Aorta (tissue), 5 donors: ENCODE measurements at regions of chr5 and their contacts with region 1.

Region 1: GRCh38 chr5:140564196-140565023 is at the starts of genes APBB3 and SLC35A4:
- DNase-seq: peak; percentile 98 to 99
- ATAC-seq: peak; percentile 96
- H3K4me3 ChIP-seq: peak within 1 kb of the TSS; percentile 64 to 69
- H3K27ac ChIP-seq: peak within 1 kb of the TSS; percentile 29 to 91
- H3K4me1 ChIP-seq: no peaks in the 10 kb centered on the region
- H3K27me3 ChIP-seq: no peaks in the 10 kb centered on the region
- total RNA-seq, gene APBB3: 32.9 to 48.3 TPM
- total RNA-seq, gene SLC35A4: 38.9 to 43.4 TPM

Region 2: DNA sequence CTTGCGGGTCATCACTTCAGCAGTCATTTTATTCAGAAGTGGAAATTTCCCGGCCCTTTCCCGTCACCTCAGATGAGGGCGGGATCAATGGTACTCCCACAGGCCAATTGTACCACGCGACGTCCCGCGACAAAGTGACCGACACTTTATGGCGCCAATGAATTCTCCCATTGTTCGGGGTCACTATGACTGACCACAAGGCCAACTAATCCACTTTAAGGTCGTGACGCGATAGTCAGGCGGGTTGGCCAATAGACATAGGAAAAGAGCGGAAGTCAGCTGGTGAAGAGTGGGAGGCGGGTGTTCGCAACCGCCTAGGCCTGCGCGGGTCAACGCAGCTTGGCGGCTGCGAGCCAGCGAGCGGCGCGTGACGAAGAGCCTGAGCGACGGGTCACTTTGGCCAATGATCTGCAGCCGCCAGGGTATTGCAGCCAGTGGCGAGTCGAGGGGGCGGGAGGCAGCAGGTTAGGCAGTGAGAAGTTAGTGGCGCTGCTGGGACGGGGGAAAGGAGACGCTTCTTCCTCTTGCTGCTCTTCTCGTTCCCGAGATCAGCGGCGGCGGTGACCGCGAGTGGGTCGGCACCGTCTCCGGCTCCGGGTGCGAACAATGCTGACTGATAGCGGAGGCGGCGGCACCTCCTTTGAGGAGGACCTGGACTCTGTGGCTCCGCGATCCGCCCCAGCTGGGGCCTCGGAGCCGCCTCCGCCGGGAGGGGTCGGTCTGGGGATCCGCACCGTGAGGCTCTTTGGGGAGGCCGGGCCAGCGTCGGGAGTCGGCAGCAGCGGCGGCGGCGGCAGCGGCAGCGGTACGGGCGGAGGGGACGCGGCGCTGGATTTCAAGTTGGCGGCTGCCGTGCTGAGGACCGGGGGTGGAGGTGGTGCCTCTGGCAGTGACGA is 162.8 kb before region 1 on chr5 and contains the start of gene ANKHD1:
- intact Hi-C with region 1: loop called in 1 of 2 experiments (anchors 2 kb)
- DNase-seq: peak; percentile 99
- ATAC-seq: peak; percentile 98
- H3K4me3 ChIP-seq: peak within 1 kb of the TSS; percentile 66 to 85
- H3K27ac ChIP-seq: peak within 1 kb of the TSS; percentile 17 to 94
- H3K4me1 ChIP-seq: peaks cover 0 to 3% of the 10 kb centered on the region in 2 donors
- H3K27me3 ChIP-seq: no peaks in the 10 kb centered on the region
- total RNA-seq, gene ANKHD1: 112 to 138 TPM

Region 3: GRCh38 chr5:140524003-140524402 is 40.4 kb before region 1 on chr5:
- intact Hi-C with region 1: no loop called
- DNase-seq: no peak
- ATAC-seq: no peak
- H3K4me3 ChIP-seq: no peak overlapping the region
- H3K27ac ChIP-seq: no peak overlapping the region
- H3K4me1 ChIP-seq: no peaks in the 10 kb centered on the region
- H3K27me3 ChIP-seq: no peaks in the 10 kb centered on the region

Region 4: DNA sequence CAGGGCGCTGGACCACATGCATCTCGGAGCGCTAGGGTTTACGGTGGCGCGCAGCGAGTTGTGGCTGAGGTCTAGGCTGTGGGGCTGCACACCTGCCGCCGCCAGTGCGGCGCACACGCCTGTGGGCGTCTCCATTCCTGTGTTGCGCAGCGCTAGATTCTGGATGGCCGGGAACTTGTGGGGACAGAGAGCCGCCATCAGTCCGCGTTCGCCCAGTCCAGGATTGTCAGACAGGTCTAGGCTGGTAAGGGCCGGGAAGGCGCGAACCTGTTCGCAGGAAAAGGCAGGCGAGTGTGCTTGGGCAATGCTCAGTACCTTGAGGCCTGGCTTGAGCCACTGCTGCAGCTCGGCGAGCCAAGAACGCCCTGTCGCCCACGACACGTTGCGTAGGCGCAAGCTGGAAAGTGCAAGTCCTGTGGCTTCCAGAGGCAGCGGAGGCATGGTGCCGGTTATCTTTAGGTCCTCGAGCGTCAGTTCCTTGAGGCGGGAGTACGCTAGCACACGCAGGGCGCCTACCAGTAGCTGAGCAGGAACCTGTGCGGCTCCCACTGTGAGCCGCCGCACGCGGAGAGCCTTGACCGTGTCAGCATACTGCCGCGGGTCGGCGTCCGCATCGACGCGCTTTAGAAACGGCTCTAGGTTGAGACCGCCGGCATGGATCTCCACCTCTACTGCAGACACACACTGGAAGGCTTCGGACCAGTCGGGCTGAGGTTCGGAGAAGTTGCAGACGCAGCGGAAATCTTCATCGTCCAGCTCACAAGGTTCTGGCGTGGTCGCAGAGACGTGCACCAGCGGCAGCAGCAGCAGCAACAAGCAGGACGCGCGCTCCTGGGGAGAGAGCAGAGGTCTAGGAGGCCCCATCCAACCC is 68.0 kb after region 1 on chr5:
- intact Hi-C with region 1: loop called (anchors 2 to 5 kb)
- DNase-seq: peak; percentile 79 to 86
- ATAC-seq: peak; percentile 84
- H3K4me3 ChIP-seq: peak overlapping the region; percentile 15 to 28
- H3K27ac ChIP-seq: no peak overlapping the region
- H3K4me1 ChIP-seq: no peaks in the 10 kb centered on the region
- H3K27me3 ChIP-seq: no peaks in the 10 kb centered on the region

Region 5: DNA sequence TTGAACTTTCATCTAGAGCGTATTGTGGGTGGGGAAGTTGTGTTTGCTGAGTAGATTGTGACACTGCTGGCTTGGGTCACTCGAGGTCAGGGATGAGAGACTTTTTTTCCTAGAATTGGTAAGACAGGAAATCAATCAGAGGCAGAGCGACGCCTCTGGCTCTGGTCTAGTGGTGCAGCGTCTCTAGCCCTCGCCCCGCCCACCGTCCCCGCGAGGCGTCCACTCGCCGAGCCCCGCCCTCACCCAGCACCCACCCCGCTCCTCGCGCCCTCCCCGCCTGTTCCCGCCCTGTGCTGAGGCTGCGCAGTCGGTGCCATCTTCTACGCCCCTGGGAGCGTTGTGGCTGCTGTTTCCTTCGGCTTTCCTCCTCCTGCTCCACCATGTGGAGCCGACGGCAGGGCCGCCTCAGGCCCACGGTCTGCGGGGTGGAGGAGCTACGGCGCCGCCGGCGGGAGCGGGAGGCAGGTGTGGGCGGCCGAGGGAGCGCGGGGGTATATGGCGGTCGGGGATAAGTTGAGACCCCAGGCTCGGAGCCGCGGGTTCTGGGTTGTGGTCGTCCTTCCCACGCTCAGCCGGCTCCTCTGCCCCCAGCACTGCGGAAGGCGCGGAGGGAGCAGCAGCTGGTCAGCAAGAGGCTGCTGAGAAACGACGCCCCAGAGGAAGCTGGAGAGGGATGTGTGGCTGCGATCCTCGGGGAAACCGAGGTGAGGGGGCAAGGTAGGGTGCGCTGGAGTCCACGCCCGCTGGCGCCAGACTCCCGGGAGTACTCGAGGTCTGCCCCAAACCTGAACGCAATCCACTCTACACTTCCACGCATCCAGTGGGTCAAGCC is 75.0 kb after region 1 on chr5 and contains the start of gene TMCO6:
- intact Hi-C with region 1: loop called in 1 of 2 experiments (anchors 5 kb)
- DNase-seq: peak; percentile 99
- ATAC-seq: peak; percentile 100
- H3K4me3 ChIP-seq: peak within 1 kb of the TSS; percentile 27 to 58
- H3K27ac ChIP-seq: peak within 1 kb of the TSS in 1 of 2 donors; percentile 18
- H3K4me1 ChIP-seq: no peaks in the 10 kb centered on the region
- H3K27me3 ChIP-seq: no peaks in the 10 kb centered on the region
- total RNA-seq, gene TMCO6: 8.6 to 11.9 TPM

Region 6: DNA sequence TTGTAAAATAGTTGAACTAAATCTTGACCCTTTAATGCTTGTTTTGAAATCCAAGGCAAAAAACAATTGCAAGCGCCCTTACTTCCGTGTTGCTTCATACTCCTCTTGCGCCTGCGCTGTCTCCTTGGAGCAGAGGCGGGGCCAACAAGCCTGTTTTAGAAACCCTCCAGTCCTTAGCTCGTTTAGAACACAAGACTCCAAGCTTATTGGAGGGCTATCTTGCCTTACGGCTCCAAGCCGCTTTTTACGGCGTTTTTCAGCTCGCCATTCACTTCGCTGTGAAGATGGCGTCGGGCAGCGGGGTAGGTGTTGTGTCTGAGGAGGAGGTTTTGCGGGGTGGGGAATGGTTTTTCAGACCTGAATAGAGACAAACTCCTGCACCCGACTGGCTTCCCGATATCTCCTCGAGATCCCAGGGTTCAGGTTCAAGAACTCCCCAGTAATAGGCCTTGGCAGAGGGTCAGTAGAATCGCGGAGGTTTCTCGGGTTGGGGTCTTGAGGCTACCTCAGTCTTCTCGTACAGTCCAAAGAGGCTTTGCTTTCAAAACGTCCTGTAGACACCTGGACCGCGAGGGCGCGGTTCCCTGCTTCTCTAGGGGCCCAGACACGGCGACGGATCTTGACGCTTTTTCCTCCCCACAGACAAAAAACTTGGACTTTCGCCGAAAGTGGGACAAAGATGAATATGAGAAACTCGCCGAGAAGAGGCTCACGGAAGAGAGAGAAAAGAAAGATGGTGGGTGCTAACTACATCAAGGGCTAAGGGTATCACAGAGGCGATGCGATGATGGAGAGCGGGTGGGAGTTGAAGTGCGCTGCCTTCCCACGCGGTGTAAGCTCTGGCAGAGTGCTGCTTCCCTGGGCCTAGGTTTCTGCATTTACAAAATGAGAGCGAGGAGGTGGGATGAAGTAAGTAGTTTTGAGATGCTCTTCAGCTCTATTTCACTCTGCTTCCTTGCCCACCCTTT is 136.1 kb after region 1 on chr5 and contains the start of gene ZMAT2:
- intact Hi-C with region 1: loop called in 1 of 2 experiments (anchors 10 kb)
- DNase-seq: peak; percentile 97
- ATAC-seq: peak; percentile 98
- H3K4me3 ChIP-seq: peak within 1 kb of the TSS; percentile 80 to 96
- H3K27ac ChIP-seq: peak within 1 kb of the TSS in 1 of 2 donors; percentile 82
- H3K4me1 ChIP-seq: no peaks in the 10 kb centered on the region
- H3K27me3 ChIP-seq: no peaks in the 10 kb centered on the region
- total RNA-seq, gene ZMAT2: 39.0 to 41.4 TPM